Colonic mucosa (tissue), 4 donors: ENCODE measurements at regions of chr4 and their contacts with region 1.

Region 1: GRCh38 chr4:162497564-162498167 is 333.9 kb upstream of the FSTL5 start:
- DNase-seq: no peak
- H3K4me3 ChIP-seq: no peak overlapping the region
- H3K27ac ChIP-seq: no peak overlapping the region
- H3K4me1 ChIP-seq: no peaks in the 10 kb centered on the region
- H3K27me3 ChIP-seq: no peaks in the 10 kb centered on the region
- CTCF ChIP-seq: peak; percentile 76

Region 2: DNA sequence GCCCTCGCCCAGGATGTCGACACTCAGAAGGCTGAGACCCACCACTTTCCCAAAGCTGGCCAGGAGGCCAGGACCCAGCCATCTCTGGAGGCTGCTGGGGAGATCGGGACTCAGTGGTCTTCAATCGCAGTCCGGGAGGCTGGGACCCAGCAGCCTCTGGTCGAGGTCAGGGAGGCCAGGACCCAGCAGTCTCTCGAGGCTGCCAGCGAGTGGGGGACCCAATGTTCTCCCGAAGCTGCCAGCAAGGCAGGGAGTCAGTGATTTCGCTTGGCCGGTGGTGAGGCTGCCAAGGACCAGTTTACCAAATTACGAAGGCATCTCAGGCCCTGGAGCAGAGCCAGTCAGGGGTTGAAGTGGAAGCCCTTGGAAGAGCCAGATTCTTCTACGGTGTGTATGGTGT is 487.5 kb after region 1 on chr4:
- intact Hi-C with region 1: no loop called
- DNase-seq: no peak
- H3K4me3 ChIP-seq: no peak overlapping the region
- H3K27ac ChIP-seq: no peak overlapping the region
- H3K4me1 ChIP-seq: no peaks in the 10 kb centered on the region
- H3K27me3 ChIP-seq: no peaks in the 10 kb centered on the region
- CTCF ChIP-seq: no peak

Region 3: DNA sequence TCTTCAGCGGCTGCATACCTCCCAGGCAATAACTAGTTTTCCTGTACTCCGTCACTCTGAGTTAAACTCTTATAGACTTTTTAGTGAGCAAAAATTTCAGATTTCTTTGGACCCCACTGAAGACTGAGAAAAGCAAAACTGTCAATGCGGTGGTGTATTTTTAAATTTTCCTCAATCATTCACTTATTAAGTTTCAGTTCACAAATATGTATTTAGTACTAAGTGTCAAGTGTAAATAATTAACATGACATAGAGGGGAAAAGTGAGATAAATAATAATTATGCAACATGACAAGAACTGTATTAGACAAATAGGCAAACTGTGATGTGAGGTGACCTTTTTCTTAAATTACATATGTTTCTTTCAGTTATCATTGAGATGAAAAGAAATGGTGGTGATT is 544.6 kb after region 1 on chr4:
- intact Hi-C with region 1: loop called (anchors 5 kb)
- DNase-seq: no peak
- H3K4me3 ChIP-seq: no peak overlapping the region
- H3K27ac ChIP-seq: no peak overlapping the region
- H3K4me1 ChIP-seq: no peaks in the 10 kb centered on the region
- H3K27me3 ChIP-seq: no peaks in the 10 kb centered on the region
- CTCF ChIP-seq: no peak

Region 4: DNA sequence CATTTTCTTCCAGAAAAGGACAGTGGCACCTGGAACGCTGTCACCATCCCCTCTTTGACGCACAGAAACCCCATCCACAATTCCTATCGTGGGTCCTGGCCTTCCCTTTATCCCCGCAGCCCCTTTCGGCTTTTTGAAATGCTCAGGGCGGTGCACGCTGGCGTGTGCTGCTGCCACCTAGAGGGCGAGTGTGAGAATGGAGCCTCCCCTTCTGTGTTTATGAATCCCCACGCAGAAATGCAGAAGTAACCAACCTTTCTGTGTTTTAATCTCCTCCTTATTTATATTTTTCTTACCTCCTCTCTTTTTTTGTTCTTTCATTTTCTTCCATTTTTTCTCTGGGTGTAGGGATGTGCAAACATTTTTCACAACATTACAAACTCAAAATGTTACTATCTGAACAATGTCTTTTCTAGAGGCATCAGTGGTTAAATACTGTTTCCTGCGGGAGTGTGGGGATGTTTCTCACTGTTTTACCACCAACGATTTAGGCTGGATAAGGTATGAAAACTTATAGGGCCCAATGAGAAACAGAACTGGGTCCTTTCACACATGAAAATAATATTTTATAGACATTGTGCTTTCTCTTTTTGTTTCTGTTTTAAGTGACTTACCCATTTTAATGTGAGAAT is 1046.9 kb after region 1 on chr4:
- intact Hi-C with region 1: loop called (anchors 5 kb)
- DNase-seq: peak; percentile 61
- H3K4me3 ChIP-seq: peak overlapping the region; percentile 19
- H3K27ac ChIP-seq: no peak overlapping the region
- H3K4me1 ChIP-seq: no peaks in the 10 kb centered on the region
- H3K27me3 ChIP-seq: no peaks in the 10 kb centered on the region
- CTCF ChIP-seq: peak; percentile 91